GM18951 (cell line): ENCODE measurements at regions of chr1 and their contacts with region 1.

Region 1: DNA sequence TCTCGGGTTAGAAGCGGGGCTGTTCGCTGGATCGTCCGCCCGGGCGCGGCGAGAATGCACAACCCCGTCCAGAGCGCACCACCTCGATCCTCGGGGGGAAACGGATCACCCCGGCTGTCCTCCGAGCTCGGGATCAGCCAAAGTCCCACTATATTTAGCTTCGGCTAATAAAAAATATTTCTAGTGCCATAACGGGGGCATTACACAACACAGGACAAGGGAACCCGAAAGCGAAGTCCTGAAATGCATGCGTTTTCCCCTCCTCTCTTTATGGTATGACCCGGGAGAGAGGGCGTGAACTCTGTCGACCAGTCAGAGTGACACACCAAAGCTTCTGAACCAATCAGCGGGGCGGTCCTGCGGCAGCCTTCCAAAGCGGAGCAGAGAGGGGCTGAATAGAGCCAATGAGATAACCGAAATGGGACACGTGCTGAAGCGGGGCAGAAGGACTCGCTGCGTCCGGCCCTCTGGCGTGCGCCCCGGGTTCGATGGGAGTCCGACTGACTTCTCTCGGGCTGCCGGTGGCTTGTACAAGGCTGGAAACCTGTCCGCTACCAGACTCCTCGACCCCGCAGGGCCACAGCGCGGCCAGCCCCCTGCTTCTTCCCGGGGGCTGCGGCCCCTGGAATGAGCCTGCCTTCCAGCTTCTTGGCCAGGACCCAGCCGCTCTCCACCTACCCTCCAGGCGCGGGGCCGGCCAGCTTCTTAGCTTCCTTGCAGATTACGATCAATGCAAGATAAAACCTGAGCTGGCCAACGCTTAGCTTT is at the start of gene ALDH4A1:
- POLR2A ChIP-seq: peak; percentile 71

Region 2: DNA sequence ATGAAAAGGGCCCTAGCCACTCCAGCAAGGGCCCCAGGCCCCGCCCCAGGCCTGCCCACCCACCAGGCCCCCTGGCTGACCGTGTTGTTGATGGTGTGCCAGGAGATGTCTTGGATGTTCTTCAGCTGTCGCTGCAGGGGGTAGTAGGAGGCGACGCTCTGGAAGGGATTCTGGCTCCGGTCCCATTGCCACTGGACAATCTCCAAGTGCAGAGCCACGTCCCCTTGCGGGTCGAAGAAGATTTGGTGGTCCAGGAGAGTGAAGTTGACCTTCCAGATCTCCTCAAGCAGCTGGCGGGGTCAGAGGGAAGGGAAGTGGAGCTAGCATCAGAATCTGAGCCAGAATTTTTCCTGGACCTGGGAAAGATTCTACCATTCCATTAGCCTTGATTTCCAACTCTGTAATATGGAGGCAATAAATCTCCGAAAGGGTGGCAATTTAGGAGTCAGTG is 53.4 kb before region 1 on chr1:
- in situ Hi-C with region 1: no loop called
- POLR2A ChIP-seq: no peak

Region 3: DNA sequence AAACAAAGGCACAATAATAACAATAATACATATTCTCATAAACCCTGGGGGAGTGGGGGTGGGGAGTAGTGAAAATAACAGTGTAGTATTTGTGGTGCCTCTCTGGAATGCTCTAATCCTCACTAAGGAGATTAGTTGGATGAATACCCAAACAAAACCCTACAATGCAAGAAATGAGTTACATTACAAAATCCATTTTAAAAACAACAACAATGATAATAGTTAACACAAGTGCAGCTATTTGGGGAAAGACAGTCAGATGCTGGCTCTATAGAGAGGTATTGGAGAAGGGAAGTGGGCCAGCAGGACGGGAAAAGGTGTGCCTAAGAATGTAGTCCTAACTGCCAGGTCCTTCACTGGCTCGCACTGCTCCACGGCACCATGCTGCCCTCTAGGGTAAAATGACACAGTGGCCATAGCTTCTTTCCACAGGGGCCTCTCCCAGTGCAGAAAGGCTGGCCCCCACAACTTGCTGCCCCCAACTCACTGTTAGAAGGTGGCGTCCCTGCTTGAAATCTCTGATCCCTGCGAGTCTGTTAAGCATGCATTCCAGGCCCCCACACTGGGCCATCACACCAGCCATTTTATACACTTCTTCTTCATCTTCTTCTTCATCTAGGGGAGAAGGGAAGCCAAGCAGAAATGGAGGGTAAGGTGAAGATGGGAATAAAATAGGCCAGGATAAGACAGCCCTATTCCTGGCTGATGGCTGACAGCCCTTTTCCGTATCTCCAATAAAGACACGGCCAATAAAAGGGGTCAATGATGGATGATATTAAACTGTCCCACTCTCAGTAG is 193.5 kb after region 1 on chr1:
- in situ Hi-C with region 1: loop called (anchors 25 kb)
- POLR2A ChIP-seq: no peak

Region 4: GRCh38 chr1:19240673-19241538 is 338.2 kb after region 1 on chr1:
- in situ Hi-C with region 1: loop called (anchors 25 kb)
- POLR2A ChIP-seq: peak; percentile 11